AG04450 (cell line): ENCODE measurements at regions of chr17 and their contacts with region 1.

Region 1: GRCh38 chr17:44522883-44523671 is 19.9 kb upstream of the GPATCH8 start:
- DNase-seq: no peak
- H3K4me3 ChIP-seq: no peak overlapping the region
- H3K27ac ChIP-seq: no peak overlapping the region
- H3K27me3 ChIP-seq: no peaks in the 10 kb centered on the region
- CTCF ChIP-seq: peak; percentile 70

Region 2: DNA sequence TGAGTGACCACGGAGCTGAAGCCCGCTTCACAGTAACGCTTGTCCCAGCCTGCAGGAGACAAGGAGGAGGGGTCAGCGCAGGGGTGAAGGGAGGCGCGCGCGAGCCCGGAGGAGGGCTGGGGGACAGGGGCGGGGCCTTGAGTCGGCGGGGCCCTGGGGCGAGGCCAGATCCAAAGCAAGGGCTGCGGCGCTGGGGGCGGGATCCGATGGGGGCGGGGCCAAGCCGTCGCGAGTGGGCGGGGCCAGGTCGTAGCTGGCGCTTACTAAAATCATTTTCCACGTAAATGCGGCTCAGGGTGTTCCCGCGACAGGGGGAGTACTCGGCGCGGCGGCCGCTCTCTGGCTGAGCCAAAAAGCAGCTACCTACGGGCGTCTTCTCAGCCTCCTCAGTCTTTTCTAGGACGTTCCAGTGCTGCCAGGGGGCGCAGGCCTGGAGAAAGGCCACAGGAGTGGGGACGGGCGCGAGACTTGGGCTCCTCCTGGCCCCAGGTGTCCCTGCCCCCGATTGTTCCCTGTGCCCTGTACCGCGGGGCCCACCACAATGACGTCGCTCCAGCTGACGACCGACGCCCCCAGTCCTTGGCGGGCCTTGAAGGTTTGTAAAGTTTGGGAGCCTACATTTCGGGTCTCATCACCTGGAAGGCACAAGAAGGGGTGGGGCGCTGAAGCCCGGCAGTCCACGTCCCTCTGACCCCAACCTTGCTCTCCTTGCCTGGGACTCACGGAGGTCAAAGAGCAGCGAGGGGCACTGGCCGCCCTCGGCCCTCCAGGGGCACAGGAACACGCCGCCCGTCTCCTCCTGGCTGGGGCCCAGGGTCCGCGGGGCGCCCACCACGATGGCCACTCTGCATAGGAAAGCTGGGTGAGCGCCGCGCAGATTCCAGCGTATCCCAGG is 137.5 kb before region 1 on chr17:
- CTCF ChIA-PET with region 1: interaction called, 10 read pairs
- POLR2A ChIA-PET with region 1: no interaction called
- DNase-seq: peak; percentile 13
- H3K4me3 ChIP-seq: peak overlapping the region; percentile 65
- H3K27ac ChIP-seq: no peak overlapping the region
- H3K27me3 ChIP-seq: peaks cover 30% of the 10 kb centered on the region
- CTCF ChIP-seq: peak; percentile 34; the same call in 1 of the 2 replicates

Region 3: GRCh38 chr17:44400226-44400847 is 122.7 kb before region 1 on chr17:
- CTCF ChIA-PET with region 1: interaction called, 62 read pairs
- POLR2A ChIA-PET with region 1: interaction called, 4 read pairs
- DNase-seq: peak; percentile 7
- H3K4me3 ChIP-seq: no peak overlapping the region
- H3K27ac ChIP-seq: no peak overlapping the region
- H3K27me3 ChIP-seq: no peaks in the 10 kb centered on the region
- CTCF ChIP-seq: peak; percentile 64

Region 4: DNA sequence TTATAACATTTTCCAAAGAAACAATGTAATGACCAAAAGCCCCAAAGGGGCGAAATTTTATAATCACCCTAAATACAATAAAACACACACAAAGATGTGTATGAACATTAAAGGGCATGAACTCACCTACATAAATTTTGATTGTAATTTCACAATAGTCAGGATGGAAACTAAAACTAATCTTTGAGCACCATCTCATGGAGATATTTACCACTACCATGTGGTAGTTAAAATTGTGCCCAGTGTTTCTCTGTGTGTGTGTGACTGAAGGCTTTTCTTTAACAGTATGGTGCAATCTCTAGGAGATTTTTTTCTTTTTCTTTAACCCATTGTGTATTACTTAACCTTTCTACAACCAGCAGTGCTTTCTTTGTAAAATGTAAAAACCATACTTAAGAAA is 113.5 kb after region 1 on chr17:
- CTCF ChIA-PET with region 1: interaction called, 11 read pairs
- POLR2A ChIA-PET with region 1: no interaction called
- DNase-seq: peak; percentile 26
- H3K4me3 ChIP-seq: no peak overlapping the region
- H3K27ac ChIP-seq: no peak overlapping the region
- H3K27me3 ChIP-seq: peaks cover 4% of the 10 kb centered on the region
- CTCF ChIP-seq: peak; percentile 58

Region 5: GRCh38 chr17:44688675-44689476 is 165.8 kb after region 1 on chr17:
- CTCF ChIA-PET with region 1: no interaction called
- POLR2A ChIA-PET with region 1: no interaction called
- DNase-seq: no peak
- H3K4me3 ChIP-seq: peak overlapping the region; percentile 92
- H3K27ac ChIP-seq: peak overlapping the region; percentile 94
- H3K27me3 ChIP-seq: no peaks in the 10 kb centered on the region
- CTCF ChIP-seq: no peak